Activated CD4-positive, alpha-beta memory T cell treated with anti-CD3 and anti-CD28 coated beads for 36 hours (primary cell): ENCODE measurements at regions of chr11 and their contacts with region 1.

Region 1: DNA sequence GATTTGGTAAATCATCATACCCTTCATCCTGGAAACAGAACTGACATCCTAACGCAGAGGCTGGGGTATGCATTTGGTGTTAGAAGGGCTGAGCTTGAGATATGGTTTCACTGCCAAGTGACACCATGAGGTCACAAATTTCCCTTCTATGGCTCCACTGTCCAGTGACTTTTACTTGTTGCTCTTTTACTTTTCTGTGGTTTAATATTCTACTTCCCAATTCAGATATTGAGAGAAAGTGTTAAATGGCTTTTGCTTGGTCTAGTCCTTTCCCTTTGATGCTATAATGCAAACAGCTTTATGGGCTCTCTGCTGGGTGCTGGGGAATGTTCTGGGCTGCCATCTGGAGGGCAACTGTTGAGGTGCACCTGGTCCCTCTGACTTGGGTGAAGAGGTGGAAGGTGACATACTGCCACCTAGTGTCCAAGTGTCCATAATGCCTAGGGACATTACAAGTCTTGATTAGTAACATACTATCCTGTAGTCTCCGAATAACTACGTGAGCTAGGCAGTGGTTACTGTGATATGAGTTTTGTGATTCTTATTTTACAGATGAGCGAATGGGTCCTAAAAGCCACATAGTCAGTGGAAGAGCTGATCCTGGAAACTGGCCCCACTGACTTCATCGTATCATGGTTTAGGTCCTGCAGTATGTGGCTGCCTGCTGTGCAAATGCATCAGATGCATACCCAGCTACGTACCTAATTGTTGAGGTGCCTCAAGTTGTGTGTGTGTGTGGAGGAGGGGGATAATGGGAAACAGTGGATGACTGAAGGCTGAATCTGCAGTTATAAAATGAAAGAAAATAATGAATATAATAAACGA is 149.1 kb upstream of the RAG2 start:
- DNase-seq: peak; percentile 91
- H3K4me3 Mint-ChIP-seq: no peak overlapping the region
- H3K27ac Mint-ChIP-seq: no peak overlapping the region
- H3K4me1 Mint-ChIP-seq: peaks cover 3% of the 10 kb centered on the region
- H3K27me3 Mint-ChIP-seq: peaks cover 11% of the 10 kb centered on the region

Region 2: GRCh38 chr11:35087648-35088047 is 1659.5 kb before region 1 on chr11:
- CTCF ChIA-PET with region 1: no interaction called
- POLR2A ChIA-PET with region 1: no interaction called
- intact Hi-C with region 1: no loop called
- DNase-seq: peak; percentile 60
- H3K4me3 Mint-ChIP-seq: no peak overlapping the region
- H3K27ac Mint-ChIP-seq: peak overlapping the region; percentile 70
- H3K4me1 Mint-ChIP-seq: peaks cover 66% of the 10 kb centered on the region
- H3K27me3 Mint-ChIP-seq: peaks cover 1% of the 10 kb centered on the region

Region 3: GRCh38 chr11:36492724-36493304 is 254.3 kb before region 1 on chr11:
- CTCF ChIA-PET with region 1: interaction called, 13 read pairs
- POLR2A ChIA-PET with region 1: interaction called, 3 read pairs
- intact Hi-C with region 1: no loop called
- DNase-seq: no peak
- H3K4me3 Mint-ChIP-seq: no peak overlapping the region
- H3K27ac Mint-ChIP-seq: no peak overlapping the region
- H3K4me1 Mint-ChIP-seq: peaks cover 16% of the 10 kb centered on the region
- H3K27me3 Mint-ChIP-seq: no peaks in the 10 kb centered on the region

Region 4: GRCh38 chr11:36564376-36565030 is 182.6 kb before region 1 on chr11:
- CTCF ChIA-PET with region 1: interaction called, 208 read pairs
- POLR2A ChIA-PET with region 1: interaction called, 3 read pairs
- intact Hi-C with region 1: loop called (anchors 1 kb)
- DNase-seq: peak; percentile 57
- H3K4me3 Mint-ChIP-seq: peak overlapping the region; percentile 12
- H3K27ac Mint-ChIP-seq: no peak overlapping the region
- H3K4me1 Mint-ChIP-seq: peaks cover 11% of the 10 kb centered on the region
- H3K27me3 Mint-ChIP-seq: peaks cover 25% of the 10 kb centered on the region

Region 5: GRCh38 chr11:36702330-36703055 is 44.6 kb before region 1 on chr11:
- CTCF ChIA-PET with region 1: interaction called, 151 read pairs
- POLR2A ChIA-PET with region 1: no interaction called
- intact Hi-C with region 1: loop called (anchors 1 kb)
- DNase-seq: no peak
- H3K4me3 Mint-ChIP-seq: no peak overlapping the region
- H3K27ac Mint-ChIP-seq: no peak overlapping the region
- H3K4me1 Mint-ChIP-seq: peaks cover 5% of the 10 kb centered on the region
- H3K27me3 Mint-ChIP-seq: peaks cover 18% of the 10 kb centered on the region

Region 6: DNA sequence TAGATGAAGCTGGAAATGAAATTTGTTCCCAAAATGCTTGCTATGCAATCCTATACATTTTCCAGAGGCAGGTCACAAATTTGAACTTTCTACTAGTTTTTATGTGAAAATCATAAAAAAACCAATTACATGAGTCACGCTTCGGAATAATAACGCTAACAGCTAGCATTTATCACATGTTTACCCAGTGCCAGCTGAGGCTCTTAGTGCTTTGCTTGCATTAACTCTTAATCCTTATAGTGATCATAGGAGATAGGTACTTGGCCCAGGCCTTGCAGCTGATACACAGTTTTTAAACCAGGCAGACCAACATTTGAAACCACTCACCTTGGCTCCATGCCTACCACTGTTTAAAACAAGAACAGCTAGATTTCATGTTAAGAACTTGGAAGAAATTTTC is 17.3 kb before region 1 on chr11:
- CTCF ChIA-PET with region 1: interaction called, 69 read pairs
- POLR2A ChIA-PET with region 1: no interaction called
- intact Hi-C with region 1: no loop called
- DNase-seq: no peak
- H3K4me3 Mint-ChIP-seq: no peak overlapping the region
- H3K27ac Mint-ChIP-seq: no peak overlapping the region
- H3K4me1 Mint-ChIP-seq: no peaks in the 10 kb centered on the region
- H3K27me3 Mint-ChIP-seq: peaks cover 13% of the 10 kb centered on the region